WTC11 (cell line): ENCODE measurements at regions of chr22 and their contacts with region 1.

Region 1: GRCh38 chr22:41526837-41527799 is 17.2 kb downstream of the POLR3H start:
- DNase-seq: peak; percentile 76
- ATAC-seq: peak; percentile 64
- H3K4me3 Mint-ChIP-seq: no peak overlapping the region
- H3K27ac Mint-ChIP-seq: no peak overlapping the region
- H3K4me1 Mint-ChIP-seq: no peaks in the 10 kb centered on the region
- H3K27me3 Mint-ChIP-seq: peaks cover 2% of the 10 kb centered on the region; the same call in 1 of the 2 replicates
- CTCF ChIP-seq: peak; percentile 84

Region 2: DNA sequence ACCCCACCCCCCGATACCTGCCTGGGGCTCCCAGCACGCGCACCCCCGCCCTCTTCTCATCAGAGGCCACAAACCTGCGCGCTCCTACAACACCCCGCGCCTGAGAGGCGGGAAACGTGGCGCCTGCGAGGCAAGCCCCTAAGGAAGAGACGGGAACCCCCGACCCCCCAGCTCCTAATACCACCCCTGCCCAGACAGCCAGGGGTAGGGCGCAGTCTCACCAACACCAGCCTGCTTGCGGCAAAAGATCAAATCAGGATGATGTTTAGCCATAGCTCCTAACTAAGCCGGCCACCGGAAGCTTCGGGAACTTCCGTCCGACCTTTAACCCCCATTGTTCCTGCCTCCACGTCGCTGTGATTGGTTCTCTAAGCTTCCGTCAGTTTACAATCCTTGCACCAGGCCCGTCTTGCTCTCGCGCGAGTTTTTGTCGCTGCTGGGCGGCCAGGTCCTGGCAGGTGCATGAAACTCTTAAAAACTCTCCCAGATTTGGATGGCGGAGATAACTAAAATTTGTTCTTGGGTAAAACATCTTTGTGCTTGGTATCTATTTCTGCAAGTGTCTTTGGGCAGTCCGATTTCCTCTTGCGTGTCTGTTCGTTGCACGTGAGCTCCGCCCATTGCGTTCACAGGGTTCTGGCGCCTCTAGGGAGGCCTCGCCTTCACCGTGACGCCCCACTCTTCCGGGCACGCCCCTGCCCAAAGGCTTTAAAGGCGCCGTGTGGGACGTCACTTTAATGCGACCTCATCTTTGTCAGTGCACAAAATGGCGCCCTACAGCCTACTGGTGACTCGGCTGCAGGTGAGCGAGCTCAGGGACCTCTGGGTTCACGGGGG is 58.5 kb before region 1 on chr22 and contains the starts of genes ACO2 and PHF5A:
- CTCF ChIA-PET with region 1: interaction called, 11 read pairs
- POLR2A ChIA-PET with region 1: interaction called, 3 read pairs
- DNase-seq: peak; percentile 98
- ATAC-seq: peak; percentile 94
- H3K4me3 Mint-ChIP-seq: peak within 1 kb of the TSS; percentile 96
- H3K27ac Mint-ChIP-seq: peak within 1 kb of the TSS; percentile 100
- H3K4me1 Mint-ChIP-seq: peaks cover 25% of the 10 kb centered on the region
- H3K27me3 Mint-ChIP-seq: no peaks in the 10 kb centered on the region; the same call in 1 of the 2 replicates
- CTCF ChIP-seq: no peak
- total RNA-seq, gene ACO2: 98.3 to 104 TPM (median 99.3 TPM) in 3 replicates
- total RNA-seq, gene PHF5A: 93.1 to 99.6 TPM (median 97.9 TPM) in 3 replicates

Region 3: DNA sequence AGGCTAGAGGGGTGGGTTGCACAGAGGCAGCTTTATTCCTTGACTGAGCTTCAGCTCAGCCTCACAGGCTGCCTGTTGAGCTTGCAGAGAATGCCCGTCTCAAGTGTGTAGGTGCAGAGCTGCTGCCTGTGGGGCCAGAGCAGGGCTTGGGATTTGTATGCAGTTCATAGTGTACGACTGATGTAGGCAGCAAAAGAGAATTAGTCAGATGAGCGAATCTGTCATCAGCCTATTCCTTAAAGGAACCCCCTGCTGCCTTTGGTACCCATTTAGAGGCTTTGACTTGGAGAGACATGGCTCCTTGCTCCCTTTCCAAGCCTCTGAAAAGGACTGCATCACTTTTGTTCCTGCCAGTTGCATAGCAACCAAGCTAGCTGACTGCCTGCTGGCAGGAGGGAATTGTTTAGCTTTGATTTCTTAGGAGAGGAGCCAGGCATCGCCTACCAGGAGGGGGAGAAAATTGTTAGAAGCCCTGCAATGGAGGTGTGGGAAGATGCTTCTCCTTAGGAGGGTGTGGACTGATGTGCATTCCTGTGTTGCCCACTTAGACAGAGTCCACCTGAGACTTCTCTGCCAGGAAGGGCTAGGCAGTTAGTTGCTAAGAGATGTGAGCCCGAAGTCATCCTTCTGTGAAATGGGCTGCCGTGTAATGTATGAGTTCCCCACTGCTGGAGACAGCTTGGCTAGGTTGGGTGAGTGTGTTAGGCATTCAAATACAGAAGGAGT is 47.3 kb before region 1 on chr22:
- CTCF ChIA-PET with region 1: interaction called, 10 read pairs
- POLR2A ChIA-PET with region 1: interaction called, 4 read pairs
- DNase-seq: peak; percentile 15
- ATAC-seq: peak; percentile 48
- H3K4me3 Mint-ChIP-seq: no peak overlapping the region
- H3K27ac Mint-ChIP-seq: peak overlapping the region; percentile 14
- H3K4me1 Mint-ChIP-seq: peaks cover 40% of the 10 kb centered on the region
- H3K27me3 Mint-ChIP-seq: no peaks in the 10 kb centered on the region
- CTCF ChIP-seq: no peak

Region 4: DNA sequence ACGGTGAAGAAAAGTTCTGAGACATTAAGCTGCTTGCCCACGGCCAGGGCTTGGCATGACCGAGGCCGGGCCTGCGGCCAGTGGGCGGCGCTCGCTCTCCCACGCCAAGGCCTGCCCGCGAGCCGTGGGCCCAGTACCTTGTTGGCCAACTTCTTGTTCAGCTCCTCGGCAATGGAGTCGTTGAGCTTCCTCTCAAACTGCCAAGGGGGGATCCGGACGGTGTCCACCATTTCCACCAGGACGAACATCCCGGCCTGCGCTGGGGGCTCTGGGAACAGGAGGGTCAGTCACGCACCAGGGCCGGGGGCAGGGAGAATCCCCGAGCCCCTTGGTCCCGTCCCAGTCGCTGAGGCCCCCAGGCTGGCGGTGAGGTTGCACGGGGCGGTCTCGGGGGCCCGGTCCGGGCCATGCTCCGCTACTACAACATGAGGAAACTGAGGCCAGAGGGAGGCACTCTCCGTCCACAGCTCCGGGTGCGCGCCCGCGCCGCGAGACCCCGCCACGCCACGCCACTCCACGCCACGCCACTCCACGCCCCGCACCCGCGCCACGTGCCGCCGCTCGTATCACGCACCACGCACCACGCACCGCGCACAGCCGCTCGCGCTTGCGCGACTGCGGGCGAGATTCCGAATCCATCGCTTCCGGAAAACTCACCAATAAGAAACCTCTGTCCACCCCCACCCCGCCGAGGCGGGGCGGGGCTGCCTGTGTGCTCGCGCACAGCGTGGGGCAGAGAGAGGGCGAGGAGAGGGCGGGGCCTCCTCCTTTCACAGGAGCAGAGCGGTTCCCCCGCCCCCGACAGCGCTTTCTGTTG is 16.9 kb after region 1 on chr22 and contains the start of gene POLR3H:
- CTCF ChIA-PET with region 1: interaction called, 20 read pairs
- POLR2A ChIA-PET with region 1: no interaction called
- DNase-seq: peak; percentile 100
- ATAC-seq: peak; percentile 97
- H3K4me3 Mint-ChIP-seq: peak within 1 kb of the TSS; percentile 81
- H3K27ac Mint-ChIP-seq: no peak within 1 kb of the TSS
- H3K4me1 Mint-ChIP-seq: peaks cover 22% of the 10 kb centered on the region
- H3K27me3 Mint-ChIP-seq: no peaks in the 10 kb centered on the region; the same call in 1 of the 2 replicates
- CTCF ChIP-seq: no peak
- total RNA-seq, gene POLR3H: 28.8 to 30.8 TPM (median 29.8 TPM) in 3 replicates

Region 5: DNA sequence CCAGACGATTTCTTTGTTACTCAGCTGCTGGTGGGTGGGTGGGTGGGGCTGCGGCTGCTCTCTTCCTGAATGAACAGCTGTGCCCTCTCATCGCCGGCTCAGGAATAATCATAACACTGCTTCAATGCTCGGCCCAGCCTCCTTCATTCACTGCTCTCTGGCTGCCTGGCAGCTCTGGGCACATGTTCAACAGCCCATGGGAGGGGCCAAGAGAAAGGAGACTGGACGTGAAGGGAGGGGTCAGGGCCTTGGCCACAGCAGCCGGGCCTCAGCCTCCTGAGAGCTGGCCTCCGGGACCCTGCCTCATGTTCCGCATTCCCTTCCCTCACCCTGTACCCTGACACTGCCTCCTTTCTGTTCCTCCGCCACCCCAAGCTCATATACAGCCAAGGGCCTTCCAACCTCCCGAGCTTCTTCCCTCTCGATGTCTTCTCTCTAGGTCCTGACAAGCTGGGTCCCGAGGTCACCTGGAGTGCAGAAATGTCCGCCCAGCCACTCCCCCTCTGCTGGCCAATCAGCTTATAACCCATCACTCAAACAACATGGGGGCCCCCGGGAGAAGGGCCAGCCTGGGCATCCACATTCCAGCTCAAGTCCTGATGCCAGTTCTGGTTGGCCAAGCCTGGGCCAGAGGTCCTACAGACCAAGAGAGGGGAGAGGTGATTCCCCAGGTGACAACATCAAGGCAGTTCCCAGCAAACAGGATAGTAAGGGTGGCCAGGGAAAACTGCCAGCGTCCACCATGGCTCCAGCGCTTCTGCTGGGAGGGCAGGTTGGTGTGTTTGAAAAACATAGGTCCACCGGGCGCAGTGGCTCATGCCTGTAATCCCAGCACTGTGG is 30.5 kb after region 1 on chr22:
- CTCF ChIA-PET with region 1: interaction called, 12 read pairs
- POLR2A ChIA-PET with region 1: no interaction called
- DNase-seq: peak; percentile 39
- ATAC-seq: peak; percentile 16; the same call in 1 of the 2 replicates
- H3K4me3 Mint-ChIP-seq: no peak overlapping the region
- H3K27ac Mint-ChIP-seq: no peak overlapping the region; the same call in 1 of the 2 replicates
- H3K4me1 Mint-ChIP-seq: peaks cover 37% of the 10 kb centered on the region
- H3K27me3 Mint-ChIP-seq: no peaks in the 10 kb centered on the region
- CTCF ChIP-seq: no peak

Region 6: DNA sequence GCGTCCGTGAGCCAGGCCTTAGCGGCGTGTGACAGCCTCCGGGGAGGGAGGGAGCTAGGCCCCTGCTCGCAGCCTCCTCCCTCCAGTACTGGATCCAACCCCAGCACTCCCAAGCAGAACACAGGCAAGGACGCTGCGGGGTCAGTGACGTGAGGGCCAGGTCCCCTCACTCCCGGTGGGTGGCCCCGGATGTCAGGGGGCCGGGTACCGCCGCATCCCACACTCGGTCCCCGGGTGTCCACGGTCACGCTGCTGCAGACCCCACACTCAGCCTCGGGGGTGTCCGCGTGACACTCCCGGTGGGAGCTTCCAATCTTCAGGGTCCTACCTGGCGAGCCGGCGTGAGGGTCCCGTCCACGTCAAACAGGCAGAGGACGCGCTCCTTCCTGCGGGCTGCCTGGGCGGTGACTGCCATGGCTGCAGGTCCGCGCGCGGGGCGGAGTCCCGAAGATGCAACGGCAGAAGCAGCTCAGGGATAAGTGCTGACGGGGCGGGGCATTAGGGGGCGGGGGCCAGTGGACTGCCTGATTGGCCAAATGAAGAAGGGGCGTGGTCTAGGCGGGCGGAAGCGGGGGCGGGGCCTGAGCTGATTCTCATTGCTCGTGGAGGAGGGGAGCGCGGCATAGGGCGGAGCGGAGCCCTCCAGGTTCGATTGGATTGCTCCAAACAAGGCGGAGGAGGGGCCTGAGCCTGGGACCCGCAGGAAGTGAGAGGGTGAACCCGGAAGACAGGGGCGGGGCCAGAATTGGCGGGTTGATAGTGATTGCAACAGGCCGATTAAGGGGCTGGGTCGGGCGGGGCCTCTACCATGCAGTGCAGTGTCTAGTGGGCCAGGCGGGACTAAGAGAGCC is 62.5 kb after region 1 on chr22 and contains the start of gene PMM1:
- CTCF ChIA-PET with region 1: interaction called, 14 read pairs
- POLR2A ChIA-PET with region 1: no interaction called
- DNase-seq: peak; percentile 100
- ATAC-seq: peak; percentile 99
- H3K4me3 Mint-ChIP-seq: peak within 1 kb of the TSS; percentile 89
- H3K27ac Mint-ChIP-seq: peak within 1 kb of the TSS; percentile 76
- H3K4me1 Mint-ChIP-seq: peaks cover 6% of the 10 kb centered on the region
- H3K27me3 Mint-ChIP-seq: peaks cover 10% of the 10 kb centered on the region; the same call in 1 of the 2 replicates
- CTCF ChIP-seq: no peak
- total RNA-seq, gene PMM1: 14.8 to 15.7 TPM (median 15.0 TPM) in 3 replicates

Region 7: DNA sequence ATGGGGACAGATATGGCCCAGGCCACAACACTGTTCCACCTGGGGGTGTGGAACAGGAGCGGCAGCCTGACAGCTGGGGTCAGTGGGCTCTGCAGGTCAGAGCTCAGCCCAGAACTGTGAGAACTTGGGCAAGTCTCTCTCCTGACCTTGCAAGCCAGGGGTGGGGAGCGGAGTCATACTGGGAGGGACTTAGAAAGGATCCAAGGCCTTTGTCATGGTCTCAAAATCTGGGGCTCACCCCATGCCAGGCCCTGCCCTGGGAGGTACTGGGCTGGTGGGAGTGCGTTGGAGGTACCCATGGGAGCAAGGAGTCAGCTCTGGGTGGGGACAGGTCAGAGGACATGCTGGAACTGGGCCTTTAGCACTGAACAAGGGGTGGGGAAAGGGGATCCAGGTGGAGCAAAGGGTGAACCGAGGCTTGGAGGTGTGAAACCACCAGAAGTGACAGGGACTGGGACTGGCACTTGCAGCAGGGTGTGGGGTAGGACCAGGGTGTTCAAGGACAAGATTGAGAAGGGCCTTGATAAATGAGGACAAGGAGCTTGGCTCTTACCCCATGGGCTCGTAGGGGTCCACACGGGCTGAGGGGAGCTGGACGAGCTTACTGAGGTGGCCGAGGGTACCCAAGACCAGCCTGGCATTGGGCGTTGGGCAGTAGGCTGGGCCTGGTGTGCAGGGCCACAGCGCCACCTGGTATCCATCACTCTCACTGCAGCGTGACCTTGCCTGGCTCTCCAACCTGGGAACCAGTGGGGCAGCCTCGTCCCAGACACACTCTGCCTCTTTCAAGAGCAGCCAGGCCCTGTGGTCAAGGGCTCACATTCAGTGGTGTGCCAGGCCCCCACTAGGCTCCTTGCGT is 69.9 kb after region 1 on chr22:
- CTCF ChIA-PET with region 1: interaction called, 21 read pairs
- POLR2A ChIA-PET with region 1: interaction called, 3 read pairs
- DNase-seq: peak; percentile 79
- ATAC-seq: peak; percentile 95
- H3K4me3 Mint-ChIP-seq: no peak overlapping the region
- H3K27ac Mint-ChIP-seq: no peak overlapping the region
- H3K4me1 Mint-ChIP-seq: no peaks in the 10 kb centered on the region
- H3K27me3 Mint-ChIP-seq: peaks cover 16% of the 10 kb centered on the region; the same call in 1 of the 2 replicates
- CTCF ChIP-seq: peak; percentile 84